AG04449 (cell line): ENCODE measurements at regions of chr12 and their contacts with region 1.

Region 1: DNA sequence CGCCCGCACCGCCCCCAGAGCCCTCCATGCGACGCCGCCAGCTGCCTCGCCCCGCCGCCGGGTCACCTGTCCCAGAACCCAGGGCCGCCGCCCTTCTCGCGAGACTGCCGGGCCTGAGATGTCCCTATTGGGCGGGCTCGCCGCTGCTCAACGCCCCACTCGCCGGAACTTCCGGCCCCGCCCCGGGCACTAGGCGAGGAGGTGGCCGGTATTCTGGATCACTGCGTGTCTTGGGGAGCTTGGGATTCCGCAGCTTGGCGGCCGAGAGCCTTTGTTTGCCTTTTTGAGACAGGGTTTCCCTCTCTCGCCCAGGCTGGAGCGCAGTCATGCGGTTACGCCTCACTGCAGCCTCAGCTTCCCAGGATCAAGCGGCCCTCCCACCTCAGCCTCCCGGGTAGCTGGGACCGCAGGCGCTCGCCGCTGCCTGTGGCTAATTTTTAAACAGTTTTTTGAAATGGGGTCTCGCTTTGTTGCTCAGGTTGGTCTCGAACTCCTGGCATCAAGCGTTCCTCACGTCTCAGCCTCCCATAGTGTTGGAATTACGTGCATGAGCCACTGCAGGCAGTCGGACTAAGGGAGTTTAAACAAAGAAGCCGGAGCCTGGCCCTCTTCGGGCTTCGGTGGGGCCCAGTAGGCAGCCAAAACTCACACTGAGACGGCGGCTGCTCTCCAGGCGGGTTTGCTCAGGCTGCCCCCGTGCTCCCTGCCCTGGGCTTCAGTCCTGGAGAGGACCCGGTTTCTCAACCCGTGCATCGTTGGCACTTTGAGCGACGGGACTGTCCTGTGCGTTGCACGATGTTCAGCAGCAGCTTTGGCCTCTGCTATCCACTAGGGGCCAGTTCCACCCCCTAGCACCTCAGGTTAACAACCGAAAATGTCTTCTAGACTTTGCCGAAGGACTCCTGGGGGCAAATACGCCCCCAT is at the start of gene SLC15A4:
- DNase-seq: peak; percentile 21
- H3K4me3 ChIP-seq: peak within 1 kb of the TSS; percentile 94
- CTCF ChIP-seq: no peak

Region 2: GRCh38 chr12:128810182-128811127 is 13.7 kb before region 1 on chr12:
- CTCF ChIA-PET with region 1: no interaction called
- POLR2A ChIA-PET with region 1: interaction called, 10 read pairs
- DNase-seq: no peak
- H3K4me3 ChIP-seq: no peak overlapping the region
- CTCF ChIP-seq: no peak